Dorsolateral prefrontal cortex (tissue), 120 donors: ENCODE measurements at regions of chr4 and their contacts with region 1.

Region 1: GRCh38 chr4:25986807-25987206 is 72.8 kb downstream of the SMIM20 start:
- DNase-seq: no peak
- H3K4me3 ChIP-seq: peak overlapping the region in 3 of 59 donors; percentile 5 to 20 (median 20)
- H3K27ac ChIP-seq: peak overlapping the region in 6 of 59 donors; percentile 8 to 49 (median 41)
- H3K27me3 ChIP-seq: no peaks in the 10 kb centered on the region
- CTCF ChIP-seq: no peak

Region 2: DNA sequence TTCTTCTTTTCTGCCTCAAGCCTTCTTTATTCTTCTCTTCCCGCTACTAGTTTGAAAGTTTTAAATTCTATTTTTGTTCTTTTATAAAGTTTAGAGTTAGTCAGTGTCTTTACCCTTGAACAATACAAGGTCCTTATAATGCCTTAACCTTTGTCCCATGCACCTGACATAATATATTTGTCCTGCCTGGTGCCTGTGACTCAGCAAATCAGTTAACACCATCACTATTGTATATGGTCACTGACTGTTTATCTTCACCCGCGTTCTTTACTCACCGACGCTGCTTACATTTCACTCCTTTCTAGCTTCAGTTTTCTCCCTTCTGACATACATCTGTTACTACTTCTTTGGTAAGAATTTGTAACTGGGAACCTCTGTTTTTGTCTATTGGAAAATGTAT is 67.1 kb before region 1 on chr4:
- intact Hi-C with region 1: loop called in 1 of 2 experiments (anchors 5 kb)
- DNase-seq: no peak
- H3K4me3 ChIP-seq: no peak overlapping the region
- H3K27ac ChIP-seq: no peak overlapping the region
- H3K27me3 ChIP-seq: no peaks in the 10 kb centered on the region
- CTCF ChIP-seq: no peak

Region 3: GRCh38 chr4:26076000-26076587 is 89.3 kb after region 1 on chr4:
- intact Hi-C with region 1: loop called in 1 of 2 experiments (anchors 5 kb)
- DNase-seq: no peak
- H3K4me3 ChIP-seq: no peak overlapping the region
- H3K27ac ChIP-seq: peak overlapping the region in 12 of 59 donors; percentile 2 to 66 (median 24)
- H3K27me3 ChIP-seq: peaks cover 0 to under 1% (median 0%) of the 10 kb centered on the region in 45 donors
- CTCF ChIP-seq: no peak